Posterior vena cava (tissue), 2 donors: ENCODE measurements at regions of chr4 and their contacts with region 1.

Region 1: DNA sequence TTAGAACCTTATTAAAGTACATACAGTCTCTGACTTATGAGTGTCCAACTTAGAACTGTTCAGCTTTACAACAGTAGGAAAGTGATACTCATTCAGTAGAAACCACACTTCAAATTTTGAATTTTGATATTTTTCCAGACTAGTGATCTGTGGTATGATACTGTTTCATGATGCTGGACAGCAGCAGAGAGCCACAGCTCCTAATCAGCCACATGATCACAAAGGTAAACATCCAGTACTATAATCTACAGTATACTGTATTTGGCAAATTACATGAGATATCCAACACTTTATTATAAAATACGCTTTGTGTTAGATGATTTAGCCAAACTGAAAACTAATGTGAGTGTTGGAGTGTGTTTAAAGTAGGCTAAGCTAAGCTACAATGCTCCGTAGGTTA is 38.2 kb downstream of the MFSD8 start:
- DNase-seq: no peak

Region 2: DNA sequence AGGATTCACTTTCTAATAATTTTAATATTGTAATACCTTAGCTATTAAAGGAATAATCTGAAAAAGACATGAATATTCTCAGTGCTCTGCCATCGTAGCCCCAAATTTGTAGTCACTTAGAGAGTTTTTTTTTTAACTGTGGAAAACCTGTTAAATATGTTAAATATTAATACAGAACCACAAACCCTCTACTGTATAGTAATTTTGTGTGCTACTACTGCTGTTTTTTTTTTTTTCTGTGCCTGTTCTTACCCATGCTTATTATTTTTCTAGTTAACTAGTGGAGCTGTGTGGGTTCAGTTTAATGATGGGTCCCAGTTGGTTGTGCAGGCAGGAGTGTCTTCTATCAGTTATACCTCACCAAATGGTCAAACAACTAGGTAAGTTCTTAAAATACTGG is 30.2 kb before region 1 on chr4:
- intact Hi-C with region 1: loop called in 1 of 2 experiments (anchors 2 kb)
- DNase-seq: no peak